ENCODE measurements at regions of chr21 and their contacts with region 1.

Region 1: GRCh38 chr21:32834916-32835235 is 63.3 kb upstream of the PAXBP1 start:
- ATAC-seq: peak in 5 of 8 experiments; percentile 63 to 90 (median 82)
- H3K4me3 ChIP-seq: no peak overlapping the region
- H3K27ac ChIP-seq: peak overlapping the region in 1 of 2 donors; percentile 15
- H3K4me1 ChIP-seq: peaks cover 13 to 14% of the 10 kb centered on the region in 2 donors

Region 2: DNA sequence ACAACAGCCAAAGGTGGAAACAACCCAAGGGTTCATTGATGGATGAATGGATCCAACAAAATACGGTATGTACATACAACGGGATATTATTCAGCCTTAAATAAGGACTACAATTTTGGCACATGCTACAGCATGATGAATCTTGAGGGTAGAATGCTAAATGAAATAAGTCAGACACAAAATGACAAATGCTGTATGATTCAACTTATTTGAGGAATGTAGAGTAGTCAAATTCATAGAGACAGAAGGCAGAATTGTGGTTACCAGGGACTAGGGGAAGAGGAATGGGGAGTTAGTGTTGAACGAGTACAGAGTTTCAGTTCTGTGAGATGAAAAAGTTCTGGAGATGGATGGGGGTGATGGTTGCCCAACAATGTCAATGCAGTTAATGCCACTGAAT is 54.7 kb after region 1 on chr21:
- in situ Hi-C with region 1: no loop called
- ATAC-seq: no peak
- H3K4me3 ChIP-seq: no peak overlapping the region
- H3K27ac ChIP-seq: no peak overlapping the region
- H3K4me1 ChIP-seq: no peaks in the 10 kb centered on the region

Region 3: GRCh38 chr21:33019885-33020557 is 185.1 kb after region 1 on chr21:
- in situ Hi-C with region 1: no loop called
- ATAC-seq: peak in 7 of 8 experiments; percentile 20 to 79 (median 67)
- H3K4me3 ChIP-seq: peak overlapping the region; percentile 5 to 25 (median 22)
- H3K27ac ChIP-seq: no peak overlapping the region
- H3K4me1 ChIP-seq: peaks cover 20 to 33% of the 10 kb centered on the region in 2 donors

Region 4: GRCh38 chr21:33127154-33127893 is 292.4 kb after region 1 on chr21:
- in situ Hi-C with region 1: loop called in 4 of 9 experiments (anchors 10 to 25 kb)
- ATAC-seq: peak; percentile 93 to 99 (median 96)
- H3K4me3 ChIP-seq: peak overlapping the region; percentile 14 to 33 (median 22)
- H3K27ac ChIP-seq: peak overlapping the region in 1 of 2 donors; percentile 7
- H3K4me1 ChIP-seq: peaks cover 33 to 39% of the 10 kb centered on the region in 2 donors

Region 5: GRCh38 chr21:33199516-33200217 is 364.8 kb after region 1 on chr21:
- in situ Hi-C with region 1: loop called in 3 of 9 experiments (anchors 5 to 25 kb)
- ATAC-seq: peak; percentile 61 to 91 (median 84)
- H3K4me3 ChIP-seq: no peak overlapping the region
- H3K27ac ChIP-seq: no peak overlapping the region
- H3K4me1 ChIP-seq: peaks cover 3 to 7% of the 10 kb centered on the region in 2 donors

Measured in motor neuron (in vitro differentiated cells).